SK-N-SH (cell line): ENCODE measurements at regions of chr12 and their contacts with region 1.

Region 1: DNA sequence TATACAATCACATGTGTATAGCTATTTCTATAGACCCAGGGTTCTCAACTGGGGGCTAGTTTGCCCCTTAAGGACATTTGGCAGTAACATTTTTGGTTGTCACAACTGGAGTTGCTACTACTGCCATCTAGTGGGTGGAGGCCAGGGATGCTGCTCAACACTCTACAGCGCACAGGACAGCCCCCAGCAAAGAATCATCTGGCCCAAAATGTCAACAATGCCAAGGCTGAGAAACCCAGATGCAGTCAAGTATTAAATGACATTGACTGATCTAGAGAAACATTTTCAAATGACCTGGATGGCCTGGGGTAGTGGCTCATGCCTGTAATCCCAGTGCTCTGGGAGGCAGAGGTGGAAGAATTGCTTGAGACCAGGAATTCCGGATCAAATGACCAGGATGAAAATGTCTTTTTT is 5.8 kb downstream of the WSB2 start:
- DNase-seq: peak; percentile 69
- H3K4me3 ChIP-seq: no peak overlapping the region; a peak in 1 of 4 replicates
- H3K27ac ChIP-seq: peak overlapping the region in 1 of 2 experiments; percentile 41; a peak in 1 of 4 replicates
- H3K4me1 ChIP-seq: peaks cover 5 to 27% of the 10 kb centered on the region in 2 experiments
- H3K27me3 ChIP-seq: no peaks in the 10 kb centered on the region
- CTCF ChIP-seq: peak; percentile 80
- EP300 ChIP-seq: no peak
- RAD21 ChIP-seq: peak; percentile 35

Region 2: GRCh38 chr12:118010903-118011302 is 44.2 kb before region 1 on chr12:
- CTCF ChIA-PET with region 1: no interaction called
- POLR2A ChIA-PET with region 1: no interaction called
- DNase-seq: no peak
- H3K4me3 ChIP-seq: no peak overlapping the region
- H3K27ac ChIP-seq: no peak overlapping the region
- H3K4me1 ChIP-seq: no peaks in the 10 kb centered on the region
- H3K27me3 ChIP-seq: no peaks in the 10 kb centered on the region
- CTCF ChIP-seq: no peak
- EP300 ChIP-seq: no peak
- RAD21 ChIP-seq: no peak

Region 3: DNA sequence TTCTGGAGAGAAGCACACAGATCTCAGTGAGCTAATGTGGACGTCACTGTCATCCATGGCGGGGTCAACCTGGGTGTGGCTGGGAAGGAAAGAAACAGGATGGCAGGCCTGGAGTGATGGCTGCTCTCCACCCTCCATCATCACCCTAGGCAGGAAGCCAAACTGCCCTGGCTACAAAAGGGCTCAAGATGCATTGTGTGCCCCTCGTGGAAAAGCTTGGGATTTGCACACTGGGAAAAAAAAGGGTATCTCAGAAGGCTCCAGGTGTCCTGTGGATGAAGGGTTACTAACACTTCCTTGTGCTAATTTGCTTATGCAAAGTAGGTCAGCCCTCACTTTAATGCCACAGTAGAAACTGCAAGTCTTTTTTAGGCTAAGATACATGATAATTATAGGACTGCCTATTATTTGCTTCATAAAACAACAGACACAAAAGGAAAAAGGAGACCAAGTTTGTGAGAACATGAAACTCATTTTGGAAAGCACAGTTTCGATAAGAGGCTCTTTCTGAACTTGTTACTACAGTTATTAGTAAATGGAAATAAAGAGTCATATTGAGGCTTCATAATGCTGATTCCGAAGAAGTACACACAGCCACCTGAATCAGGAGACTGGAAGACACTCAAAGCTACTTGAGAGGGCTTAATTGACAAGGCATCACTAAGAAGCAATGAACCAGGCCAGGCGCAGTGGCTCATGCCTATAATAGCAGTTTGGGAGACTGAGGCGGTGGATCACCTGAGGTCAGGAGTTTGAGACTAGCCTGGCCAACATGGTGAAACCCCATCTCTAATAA is 19.7 kb before region 1 on chr12:
- CTCF ChIA-PET with region 1: interaction called, 15 read pairs
- POLR2A ChIA-PET with region 1: no interaction called
- DNase-seq: peak; percentile 27
- H3K4me3 ChIP-seq: no peak overlapping the region
- H3K27ac ChIP-seq: peak overlapping the region in 1 of 2 experiments; percentile 20; a peak in 1 of 4 replicates
- H3K4me1 ChIP-seq: peaks cover 11 to 12% of the 10 kb centered on the region in 2 experiments; a peak in 2 of 4 replicates
- H3K27me3 ChIP-seq: no peaks in the 10 kb centered on the region
- CTCF ChIP-seq: no peak
- EP300 ChIP-seq: no peak
- RAD21 ChIP-seq: no peak